Activated T-helper 2 cell treated with anti-CD3 and anti-CD28 coated beads, Interferon-gamma antibody, Interleukin-2, Interleukin-4, amounts not matched to agents 10 μg/mL and 5 μg/mL and 100 μg/mL, durations not matched to agents 14 hours and 24 hours and 36 hours (primary cell): ENCODE measurements at regions of chr12 and their contacts with region 1.

Region 1: GRCh38 chr12:108618079-108618952 is 15.4 kb downstream of the SELPLG start:
- DNase-seq: peak; percentile 60
- H3K4me3 Mint-ChIP-seq: no peak overlapping the region
- H3K27ac Mint-ChIP-seq: peak overlapping the region; percentile 43
- H3K4me1 Mint-ChIP-seq: peaks cover 30% of the 10 kb centered on the region
- H3K27me3 Mint-ChIP-seq: no peaks in the 10 kb centered on the region

Region 2: DNA sequence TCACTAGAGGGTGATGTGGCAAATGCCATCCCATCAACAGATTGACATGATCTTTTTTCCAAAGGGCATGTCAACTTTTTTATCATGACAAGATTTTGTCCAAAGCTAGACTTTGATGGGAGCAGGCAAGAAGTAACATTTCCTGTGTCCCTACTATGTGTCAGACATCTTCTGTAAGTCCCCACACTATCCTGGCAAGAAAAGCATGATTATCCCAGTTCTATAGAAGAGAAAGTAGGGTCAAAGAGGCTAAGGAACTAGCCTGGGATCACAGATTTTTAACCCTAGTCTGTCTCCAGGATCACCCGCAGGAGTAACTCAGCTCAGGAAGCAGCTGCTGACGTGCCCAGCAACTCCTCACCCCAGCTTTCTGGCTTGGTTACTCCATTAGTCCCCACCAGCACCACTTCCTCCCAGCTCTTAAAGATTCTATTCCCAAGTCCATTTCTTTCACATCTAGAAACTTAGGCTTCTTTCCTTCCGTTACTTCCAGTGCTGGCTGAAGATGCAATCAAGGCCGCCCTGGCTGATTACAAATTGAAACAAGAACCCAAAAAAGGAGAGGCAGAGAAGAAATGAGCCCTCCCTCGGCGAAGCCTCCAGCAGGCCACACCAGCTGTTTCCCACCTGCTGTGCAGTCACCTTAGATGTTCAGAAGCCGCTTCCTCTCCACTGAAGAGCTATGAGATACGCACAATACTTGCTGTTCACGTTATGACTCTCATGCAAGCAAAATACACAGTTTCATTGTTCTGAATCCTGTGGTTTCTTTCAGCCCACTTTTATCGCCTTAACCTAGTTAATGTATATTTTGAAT is 49.8 kb before region 1 on chr12:
- intact Hi-C with region 1: loop called (anchors 1 kb)
- DNase-seq: peak; percentile 73
- H3K4me3 Mint-ChIP-seq: peak overlapping the region; percentile 59
- H3K27ac Mint-ChIP-seq: peak overlapping the region; percentile 88
- H3K4me1 Mint-ChIP-seq: peaks cover 37% of the 10 kb centered on the region
- H3K27me3 Mint-ChIP-seq: no peaks in the 10 kb centered on the region